ENCODE measurements at regions of chr5 and their contacts with region 1.

Region 1: GRCh38 chr5:10424124-10424731 is 17.5 kb upstream of the ROPN1L start:
- DNase-seq: no peak
- ATAC-seq: peak in 3 of 4 donors; percentile 59 to 85 (median 73)
- H3K4me3 ChIP-seq: no peak overlapping the region
- H3K27ac ChIP-seq: no peak overlapping the region
- H3K4me1 ChIP-seq: peaks cover 6% of the 10 kb centered on the region
- H3K27me3 ChIP-seq: no peaks in the 10 kb centered on the region
- CTCF ChIP-seq: peak; percentile 44

Region 2: GRCh38 chr5:10249948-10250803 is 174.1 kb before region 1 on chr5 and contains the start of gene CCT5:
- intact Hi-C with region 1: loop called (anchors 5 to 10 kb)
- DNase-seq: peak; percentile 91 to 96
- ATAC-seq: peak; percentile 88 to 91 (median 90)
- H3K4me3 ChIP-seq: peak within 1 kb of the TSS; percentile 98
- H3K27ac ChIP-seq: peak within 1 kb of the TSS; percentile 96
- H3K4me1 ChIP-seq: peaks cover 39% of the 10 kb centered on the region
- H3K27me3 ChIP-seq: no peaks in the 10 kb centered on the region
- CTCF ChIP-seq: no peak
- total RNA-seq, gene CCT5: 150 to 211 (median 197) TPM

Region 3: GRCh38 chr5:10257870-10258269 is 166.4 kb before region 1 on chr5:
- intact Hi-C with region 1: loop called (anchors 5 to 10 kb)
- DNase-seq: no peak
- ATAC-seq: no peak
- H3K4me3 ChIP-seq: no peak overlapping the region
- H3K27ac ChIP-seq: no peak overlapping the region
- H3K4me1 ChIP-seq: peaks cover 8% of the 10 kb centered on the region
- H3K27me3 ChIP-seq: no peaks in the 10 kb centered on the region
- CTCF ChIP-seq: no peak